ENCODE measurements at regions of chr17 and their contacts with region 1.

Region 1: GRCh38 chr17:41966463-41967140 is at the start of gene CNP:
- DNase-seq: peak; percentile 95 to 97
- ATAC-seq: peak; percentile 97
- H3K4me3 ChIP-seq: peak within 1 kb of the TSS; percentile 84 to 85
- H3K27ac ChIP-seq: peak within 1 kb of the TSS in 1 of 2 donors; percentile 64
- H3K4me1 ChIP-seq: no peaks in the 10 kb centered on the region
- H3K27me3 ChIP-seq: no peaks in the 10 kb centered on the region
- total RNA-seq, gene CNP: 50.2 to 59.3 TPM

Region 2: DNA sequence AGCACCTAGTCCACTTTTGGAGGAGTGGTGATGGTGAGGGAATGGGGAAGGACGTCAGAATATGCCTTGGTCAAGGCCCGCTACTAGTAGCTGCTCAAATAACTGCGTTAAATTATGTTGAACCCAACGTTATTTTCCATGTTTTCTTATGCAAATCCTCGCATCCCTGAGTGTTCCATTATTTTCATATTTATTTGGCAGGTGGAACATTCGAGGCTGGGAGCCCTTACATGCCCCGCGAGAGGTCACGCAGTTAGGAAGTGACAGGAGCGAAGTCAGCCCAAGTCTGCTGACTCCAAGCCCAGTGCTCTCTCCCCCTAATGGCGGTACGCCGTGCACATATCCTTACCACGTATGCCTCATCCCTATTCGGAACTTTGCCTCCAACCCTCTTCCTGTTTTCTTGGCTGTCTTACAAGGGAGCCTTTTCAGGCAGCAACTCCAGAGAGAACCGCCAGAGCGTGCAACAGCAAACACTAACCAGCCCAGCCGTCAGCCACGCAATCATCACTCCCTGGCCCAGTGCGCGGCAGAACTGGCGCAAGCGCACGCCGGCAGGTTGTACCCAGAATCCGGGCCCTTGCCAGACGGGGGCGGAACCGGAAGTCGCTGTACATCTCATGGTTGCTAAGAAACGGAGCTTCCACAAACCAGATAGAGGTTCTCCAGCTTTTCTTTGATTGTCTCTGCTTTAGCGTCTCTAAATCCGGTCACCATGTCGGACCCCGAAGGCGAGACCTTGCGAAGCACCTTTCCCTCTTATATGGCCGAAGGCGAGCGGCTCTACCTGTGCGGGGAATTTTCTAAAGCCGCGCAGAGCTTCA is 36.4 kb before region 1 on chr17 and contains the start of gene ODAD4:
- intact Hi-C with region 1: no loop called
- DNase-seq: peak; percentile 99 to 100
- ATAC-seq: peak; percentile 98
- H3K4me3 ChIP-seq: peak within 1 kb of the TSS; percentile 42 to 75
- H3K27ac ChIP-seq: peak within 1 kb of the TSS in 1 of 2 donors; percentile 75
- H3K4me1 ChIP-seq: no peaks in the 10 kb centered on the region
- H3K27me3 ChIP-seq: no peaks in the 10 kb centered on the region
- total RNA-seq, gene ODAD4: 0.81 to 1.4 TPM

Region 3: GRCh38 chr17:42019509-42020404 is 53.2 kb after region 1 on chr17 and contains the start of gene NKIRAS2:
- intact Hi-C with region 1: loop called (anchors 5 kb)
- DNase-seq: peak; percentile 97 to 98
- ATAC-seq: peak; percentile 92
- H3K4me3 ChIP-seq: peak within 1 kb of the TSS; percentile 64 to 96
- H3K27ac ChIP-seq: peak within 1 kb of the TSS; percentile 25 to 58
- H3K4me1 ChIP-seq: no peaks in the 10 kb centered on the region
- H3K27me3 ChIP-seq: no peaks in the 10 kb centered on the region
- total RNA-seq, gene NKIRAS2: 25.3 to 28.5 TPM

Region 4: DNA sequence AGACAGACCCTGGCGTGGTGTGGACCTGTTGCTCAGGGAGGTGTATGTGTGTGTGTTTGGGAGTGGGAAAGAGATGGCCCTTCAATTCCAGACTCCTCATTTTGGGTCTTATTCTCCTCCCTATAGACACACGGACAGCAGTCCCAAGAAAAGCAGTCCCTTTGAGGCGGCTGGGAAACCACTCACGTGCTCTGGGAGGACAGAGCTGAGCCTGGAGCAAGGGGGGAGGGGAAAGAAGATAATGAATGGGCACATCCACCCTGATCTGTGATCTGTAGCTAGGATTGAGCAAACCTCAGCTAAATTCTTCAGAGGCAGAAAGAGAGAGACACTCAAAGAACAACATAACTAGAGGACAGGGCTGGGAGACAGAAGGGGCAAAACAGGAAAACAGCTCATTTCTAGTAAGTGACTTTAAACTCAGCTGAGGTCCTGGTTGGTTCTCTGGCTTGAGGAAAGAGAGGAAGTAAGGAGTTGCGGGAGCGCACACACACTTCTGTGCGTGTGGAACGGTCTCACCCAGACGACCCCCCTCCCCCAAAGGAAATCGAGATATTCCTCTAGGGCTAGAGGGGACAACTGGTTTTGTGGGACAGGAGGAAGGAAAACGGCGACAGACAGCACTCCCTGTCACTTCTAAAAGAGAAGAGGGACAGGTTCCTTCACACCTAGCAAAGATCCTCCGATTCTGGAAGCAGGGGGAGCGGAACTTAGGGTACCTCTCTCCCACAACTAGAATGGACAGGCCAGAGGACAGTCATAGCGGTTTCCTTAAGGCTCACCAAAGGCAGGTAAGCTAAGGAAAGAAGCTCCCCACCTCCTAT is 187.5 kb after region 1 on chr17:
- intact Hi-C with region 1: loop called in 1 of 2 experiments (anchors 2 kb)
- DNase-seq: no peak
- ATAC-seq: no peak
- H3K4me3 ChIP-seq: peak overlapping the region; percentile 75 to 89
- H3K27ac ChIP-seq: peak overlapping the region in 1 of 2 donors; percentile 6
- H3K4me1 ChIP-seq: no peaks in the 10 kb centered on the region
- H3K27me3 ChIP-seq: no peaks in the 10 kb centered on the region

Measured in aorta (tissue), 5 donors.